Naive thymus-derived CD4-positive, alpha-beta T cell (primary cell): ENCODE measurements at regions of chr9 and their contacts with region 1.

Region 1: DNA sequence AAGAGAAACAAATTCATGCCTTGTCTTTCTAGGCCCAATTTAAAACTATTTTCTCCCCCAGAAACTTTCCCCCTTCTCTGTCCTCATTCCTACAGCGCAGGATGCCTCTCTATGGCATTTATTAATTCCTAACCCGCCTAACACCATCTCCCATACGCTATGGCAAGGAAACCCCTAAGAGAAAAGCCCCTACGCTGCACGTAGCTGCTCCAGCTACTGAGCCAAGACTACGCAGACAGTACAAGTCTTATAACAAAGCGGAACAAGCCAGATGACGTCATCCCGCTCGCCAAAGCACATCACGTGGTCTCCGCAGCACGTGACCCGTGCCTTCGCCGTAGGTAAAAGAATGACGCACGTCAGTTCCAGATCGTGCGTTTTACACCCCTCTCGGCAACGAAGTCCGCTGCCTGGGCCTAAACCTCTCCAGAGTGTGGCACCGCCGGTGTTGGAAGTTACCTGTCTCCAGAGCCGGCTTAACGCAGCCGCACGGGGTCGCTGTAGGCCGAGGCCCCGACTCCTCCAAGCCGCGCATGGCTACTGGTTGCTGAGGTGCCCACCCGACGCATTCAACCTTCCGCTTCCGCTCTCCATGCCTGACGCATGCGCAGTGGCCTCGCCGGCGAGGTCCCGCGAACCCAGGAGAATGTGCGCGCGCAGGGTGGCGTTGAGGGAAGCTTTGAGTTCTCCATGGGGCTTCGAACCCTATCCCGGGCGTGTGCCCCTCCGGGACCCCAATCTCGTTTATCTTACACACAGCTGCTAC is at the start of gene TRMO:
- DNase-seq: peak; percentile 98 to 99 (median 98)
- ATAC-seq: peak; percentile 85
- H3K4me3 ChIP-seq: peak within 1 kb of the TSS; percentile 88
- H3K4me3 Mint-ChIP-seq: peak within 1 kb of the TSS; percentile 83 to 97 (median 94)
- H3K27ac ChIP-seq: peak within 1 kb of the TSS; percentile 98
- H3K27ac Mint-ChIP-seq: peak within 1 kb of the TSS; percentile 97 to 100 (median 99)
- H3K4me1 ChIP-seq: peaks cover 36 to 38% of the 10 kb centered on the region in 2 donors
- H3K4me1 Mint-ChIP-seq: peaks cover 26 to 66% (median 47%) of the 10 kb centered on the region in 7 donors
- H3K27me3 ChIP-seq: no peaks in the 10 kb centered on the region
- H3K27me3 Mint-ChIP-seq: peaks cover 0 to 5% (median 0%) of the 10 kb centered on the region in 5 donors
- total RNA-seq, gene TRMO: 26.8 to 55.3 (median 43.8) TPM

Region 2: GRCh38 chr9:97510797-97511761 is 411.1 kb before region 1 on chr9:
- CTCF ChIA-PET with region 1: no interaction called
- POLR2A ChIA-PET with region 1: no interaction called
- intact Hi-C with region 1: no loop called
- DNase-seq: no peak
- ATAC-seq: no peak
- H3K4me3 ChIP-seq: no peak overlapping the region
- H3K4me3 Mint-ChIP-seq: peak overlapping the region in 1 of 10 donors; percentile 18
- H3K27ac ChIP-seq: no peak overlapping the region
- H3K27ac Mint-ChIP-seq: peak overlapping the region in 2 of 9 donors; percentile 4 to 76
- H3K4me1 ChIP-seq: no peaks in the 10 kb centered on the region
- H3K4me1 Mint-ChIP-seq: peaks cover 0 to 16% (median 0%) of the 10 kb centered on the region in 7 donors
- H3K27me3 ChIP-seq: no peaks in the 10 kb centered on the region
- H3K27me3 Mint-ChIP-seq: peaks cover 0 to 16% (median 4%) of the 10 kb centered on the region in 5 donors

Region 3: GRCh38 chr9:97710356-97711222 is 211.6 kb before region 1 on chr9:
- CTCF ChIA-PET with region 1: interaction called, 4 read pairs
- POLR2A ChIA-PET with region 1: interaction called, 7 read pairs
- intact Hi-C with region 1: loop called (anchors 1 to 2 kb)
- DNase-seq: peak in 7 of 9 donors; percentile 32 to 65 (median 56)
- ATAC-seq: peak; percentile 92
- H3K4me3 ChIP-seq: no peak overlapping the region
- H3K4me3 Mint-ChIP-seq: peak overlapping the region in 5 of 10 donors; percentile 21 to 44 (median 38)
- H3K27ac ChIP-seq: no peak overlapping the region
- H3K27ac Mint-ChIP-seq: peak overlapping the region in 2 of 9 donors; percentile 6 to 46
- H3K4me1 ChIP-seq: peaks cover 17 to 18% of the 10 kb centered on the region in 2 donors
- H3K4me1 Mint-ChIP-seq: peaks cover 12 to 42% (median 22%) of the 10 kb centered on the region in 7 donors
- H3K27me3 ChIP-seq: no peaks in the 10 kb centered on the region
- H3K27me3 Mint-ChIP-seq: peaks cover 0 to 37% (median 13%) of the 10 kb centered on the region in 5 donors

Region 4: GRCh38 chr9:97906236-97906831 is 15.8 kb before region 1 on chr9:
- CTCF ChIA-PET with region 1: interaction called, 85 read pairs
- POLR2A ChIA-PET with region 1: interaction called, 715 read pairs
- intact Hi-C with region 1: loop called (anchors 1 kb)
- DNase-seq: peak in 7 of 9 donors; percentile 68 to 89 (median 79)
- ATAC-seq: peak; percentile 58
- H3K4me3 ChIP-seq: peak overlapping the region; percentile 51
- H3K4me3 Mint-ChIP-seq: peak overlapping the region; percentile 80 to 98 (median 92)
- H3K27ac ChIP-seq: peak overlapping the region; percentile 95
- H3K27ac Mint-ChIP-seq: peak overlapping the region; percentile 92 to 100 (median 98)
- H3K4me1 ChIP-seq: peaks cover 74 to 79% of the 10 kb centered on the region in 2 donors
- H3K4me1 Mint-ChIP-seq: peaks cover 61 to 94% (median 87%) of the 10 kb centered on the region in 7 donors
- H3K27me3 ChIP-seq: no peaks in the 10 kb centered on the region
- H3K27me3 Mint-ChIP-seq: no peaks in the 10 kb centered on the region

Region 5: DNA sequence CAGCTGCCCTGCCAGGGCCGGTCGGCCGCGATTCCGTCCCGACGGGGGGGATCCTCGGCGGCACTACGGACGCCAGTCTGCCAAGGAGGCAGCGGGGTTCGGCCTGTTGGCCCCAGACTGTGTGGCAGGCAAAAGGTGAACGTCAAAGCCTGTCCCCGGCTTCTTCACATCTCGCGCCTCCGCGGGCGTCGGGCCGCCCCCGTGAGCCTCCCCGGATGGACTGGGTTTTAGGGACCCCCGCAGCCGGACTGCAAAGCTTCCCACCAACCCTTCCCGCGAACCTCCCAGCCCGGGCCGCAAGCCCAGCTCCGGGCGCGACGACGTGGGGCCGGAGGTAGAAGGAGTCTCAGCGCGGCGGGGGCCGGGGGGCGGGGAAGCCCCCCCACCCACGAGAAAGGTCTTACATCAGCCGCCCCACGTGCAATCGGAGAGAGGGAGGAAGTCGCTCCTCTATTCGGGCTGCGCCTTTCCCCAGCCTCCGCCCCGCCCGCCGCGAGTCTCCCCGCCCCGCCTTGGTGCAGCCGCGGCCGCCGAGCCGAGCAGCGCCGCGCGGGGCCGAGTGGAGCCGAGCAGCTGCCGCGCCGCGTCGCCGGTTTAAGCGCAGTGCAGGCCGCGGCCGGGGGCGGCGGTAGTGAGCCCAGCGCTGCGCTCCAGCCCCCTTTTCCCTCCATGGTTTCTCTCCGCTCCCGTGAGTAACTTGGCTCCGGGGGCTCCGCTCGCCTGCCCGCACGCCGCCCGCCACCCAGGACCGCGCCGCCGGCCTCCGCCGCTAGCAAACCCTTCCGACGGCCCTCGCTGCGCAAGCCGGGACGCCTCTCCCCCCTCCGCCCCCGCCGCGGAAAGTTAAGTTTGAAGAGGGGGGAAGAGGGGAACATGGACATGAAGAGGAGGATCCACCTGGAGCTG is 60.8 kb after region 1 on chr9 and contains the start of gene ANP32B:
- CTCF ChIA-PET with region 1: interaction called, 22 read pairs
- POLR2A ChIA-PET with region 1: interaction called, 159 read pairs
- intact Hi-C with region 1: loop called (anchors 1 kb)
- DNase-seq: peak; percentile 94 to 97 (median 96)
- ATAC-seq: peak; percentile 90
- H3K4me3 ChIP-seq: peak within 1 kb of the TSS; percentile 85
- H3K4me3 Mint-ChIP-seq: peak within 1 kb of the TSS; percentile 79 to 92 (median 86)
- H3K27ac ChIP-seq: peak within 1 kb of the TSS; percentile 98
- H3K27ac Mint-ChIP-seq: peak within 1 kb of the TSS; percentile 25 to 94 (median 85)
- H3K4me1 ChIP-seq: peaks cover 30 to 51% of the 10 kb centered on the region in 2 donors
- H3K4me1 Mint-ChIP-seq: peaks cover 48 to 70% (median 63%) of the 10 kb centered on the region in 7 donors
- H3K27me3 ChIP-seq: no peaks in the 10 kb centered on the region
- H3K27me3 Mint-ChIP-seq: no peaks in the 10 kb centered on the region
- total RNA-seq, gene ANP32B: 143 to 267 (median 186) TPM

Region 6: GRCh38 chr9:98074115-98074990 is 152.2 kb after region 1 on chr9:
- CTCF ChIA-PET with region 1: interaction called, 3 read pairs
- POLR2A ChIA-PET with region 1: interaction called, 5 read pairs
- intact Hi-C with region 1: loop called in 1 of 2 experiments (anchors 1 kb)
- DNase-seq: peak; percentile 46 to 78 (median 63)
- ATAC-seq: peak; percentile 47
- H3K4me3 ChIP-seq: no peak overlapping the region
- H3K4me3 Mint-ChIP-seq: peak overlapping the region; percentile 26 to 79 (median 64)
- H3K27ac ChIP-seq: peak overlapping the region; percentile 81
- H3K27ac Mint-ChIP-seq: peak overlapping the region; percentile 83 to 98 (median 94)
- H3K4me1 ChIP-seq: peaks cover 27 to 28% of the 10 kb centered on the region in 2 donors
- H3K4me1 Mint-ChIP-seq: peaks cover 0 to 55% (median 46%) of the 10 kb centered on the region in 7 donors
- H3K27me3 ChIP-seq: no peaks in the 10 kb centered on the region
- H3K27me3 Mint-ChIP-seq: no peaks in the 10 kb centered on the region

Region 7: GRCh38 chr9:98255578-98256296 is 333.6 kb after region 1 on chr9 and contains the start of gene TBC1D2:
- CTCF ChIA-PET with region 1: interaction called, 9 read pairs
- POLR2A ChIA-PET with region 1: interaction called, 65 read pairs
- intact Hi-C with region 1: loop called (anchors 1 kb)
- DNase-seq: peak; percentile 96 to 98 (median 98)
- ATAC-seq: peak; percentile 96
- H3K4me3 ChIP-seq: peak within 1 kb of the TSS; percentile 80
- H3K4me3 Mint-ChIP-seq: peak within 1 kb of the TSS; percentile 96 to 99 (median 97)
- H3K27ac ChIP-seq: peak within 1 kb of the TSS; percentile 78
- H3K27ac Mint-ChIP-seq: peak within 1 kb of the TSS; percentile 90 to 99 (median 97)
- H3K4me1 ChIP-seq: peaks cover 11 to 23% of the 10 kb centered on the region in 2 donors
- H3K4me1 Mint-ChIP-seq: peaks cover 24 to 45% (median 32%) of the 10 kb centered on the region in 7 donors
- H3K27me3 ChIP-seq: no peaks in the 10 kb centered on the region
- H3K27me3 Mint-ChIP-seq: peaks cover 0 to 13% (median 0%) of the 10 kb centered on the region in 5 donors
- total RNA-seq, gene TBC1D2: 4.9 to 16.6 (median 8.8) TPM

Region 8: GRCh38 chr9:98899408-98900056 is 977.4 kb after region 1 on chr9:
- CTCF ChIA-PET with region 1: no interaction called
- POLR2A ChIA-PET with region 1: no interaction called
- intact Hi-C with region 1: no loop called
- DNase-seq: peak in 3 of 9 donors; percentile 7 to 9 (median 7)
- ATAC-seq: no peak
- H3K4me3 ChIP-seq: no peak overlapping the region
- H3K4me3 Mint-ChIP-seq: no peak overlapping the region
- H3K27ac ChIP-seq: no peak overlapping the region
- H3K27ac Mint-ChIP-seq: no peak overlapping the region
- H3K4me1 ChIP-seq: no peaks in the 10 kb centered on the region
- H3K4me1 Mint-ChIP-seq: peaks cover 0 to 8% (median 5%) of the 10 kb centered on the region in 7 donors
- H3K27me3 ChIP-seq: no peaks in the 10 kb centered on the region
- H3K27me3 Mint-ChIP-seq: peaks cover 14 to 32% (median 29%) of the 10 kb centered on the region in 5 donors